ENCODE measurements at regions of chr22 and their contacts with region 1.

Region 1: DNA sequence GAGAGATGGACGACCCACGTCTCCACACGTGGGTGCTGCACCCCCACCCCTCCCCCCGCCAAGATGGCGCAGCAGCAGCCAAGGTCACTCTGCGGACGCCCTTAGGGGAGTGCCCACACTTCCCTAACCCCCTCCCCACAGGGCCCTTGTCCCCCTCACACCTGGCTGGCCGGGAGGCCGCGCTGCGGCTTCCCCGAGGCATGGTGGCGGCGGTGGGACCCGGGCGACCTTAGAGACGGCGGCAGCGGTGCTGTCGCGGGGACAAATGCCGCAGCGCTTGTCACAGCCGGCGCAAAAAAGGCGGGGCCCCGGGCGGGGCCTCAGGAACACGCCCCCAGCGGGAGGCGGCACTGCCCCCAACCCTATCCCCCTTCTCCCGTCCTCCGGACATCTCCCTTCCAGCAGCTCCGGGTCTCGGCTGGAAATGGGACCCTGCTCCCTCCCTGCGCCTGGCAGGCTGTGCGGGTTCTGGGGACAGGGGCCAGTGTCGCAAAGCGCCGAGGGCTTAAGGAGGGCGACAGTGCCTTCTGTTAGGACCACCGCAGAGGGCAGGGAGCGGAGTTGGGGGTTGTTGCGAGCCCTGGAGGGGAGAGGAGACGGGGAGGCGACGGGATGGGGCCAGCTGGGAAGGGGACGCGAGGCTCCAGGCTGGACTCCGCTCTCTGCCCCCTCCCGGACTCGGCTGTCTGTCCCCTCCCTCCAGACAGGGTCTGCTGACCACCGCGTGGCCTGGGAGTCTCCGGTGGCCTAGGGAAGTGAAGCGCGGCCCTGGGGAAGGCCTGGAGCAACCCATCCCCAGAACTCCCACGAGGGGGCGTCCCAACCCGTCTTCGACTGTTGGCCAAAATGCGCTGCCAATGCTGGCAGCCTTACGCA is at the start of gene CHCHD10:
- DNase-seq: no peak
- H3K4me3 ChIP-seq: peak within 1 kb of the TSS; percentile 55 to 84
- H3K27ac ChIP-seq: peak within 1 kb of the TSS; percentile 68
- H3K4me1 ChIP-seq: peaks cover 62% of the 10 kb centered on the region
- H3K27me3 ChIP-seq: no peaks in the 10 kb centered on the region
- CTCF ChIP-seq: peak; percentile 48 to 78 (median 71)
- POLR2A ChIP-seq: peak in 1 of 2 donors; percentile 56
- total RNA-seq, gene CHCHD10: 12.0 TPM

Region 2: GRCh38 chr22:23838681-23839468 is 71.0 kb after region 1 on chr22 and contains the start of gene DERL3:
- intact Hi-C with region 1: loop called (anchors 5 kb)
- DNase-seq: peak in 1 of 2 donors; percentile 95
- H3K4me3 ChIP-seq: peak within 1 kb of the TSS; percentile 40 to 52
- H3K27ac ChIP-seq: no peak within 1 kb of the TSS
- H3K4me1 ChIP-seq: peaks cover 23% of the 10 kb centered on the region
- H3K27me3 ChIP-seq: no peaks in the 10 kb centered on the region
- CTCF ChIP-seq: no peak
- POLR2A ChIP-seq: no peak
- total RNA-seq, gene DERL3: 0.25 TPM

Region 3: DNA sequence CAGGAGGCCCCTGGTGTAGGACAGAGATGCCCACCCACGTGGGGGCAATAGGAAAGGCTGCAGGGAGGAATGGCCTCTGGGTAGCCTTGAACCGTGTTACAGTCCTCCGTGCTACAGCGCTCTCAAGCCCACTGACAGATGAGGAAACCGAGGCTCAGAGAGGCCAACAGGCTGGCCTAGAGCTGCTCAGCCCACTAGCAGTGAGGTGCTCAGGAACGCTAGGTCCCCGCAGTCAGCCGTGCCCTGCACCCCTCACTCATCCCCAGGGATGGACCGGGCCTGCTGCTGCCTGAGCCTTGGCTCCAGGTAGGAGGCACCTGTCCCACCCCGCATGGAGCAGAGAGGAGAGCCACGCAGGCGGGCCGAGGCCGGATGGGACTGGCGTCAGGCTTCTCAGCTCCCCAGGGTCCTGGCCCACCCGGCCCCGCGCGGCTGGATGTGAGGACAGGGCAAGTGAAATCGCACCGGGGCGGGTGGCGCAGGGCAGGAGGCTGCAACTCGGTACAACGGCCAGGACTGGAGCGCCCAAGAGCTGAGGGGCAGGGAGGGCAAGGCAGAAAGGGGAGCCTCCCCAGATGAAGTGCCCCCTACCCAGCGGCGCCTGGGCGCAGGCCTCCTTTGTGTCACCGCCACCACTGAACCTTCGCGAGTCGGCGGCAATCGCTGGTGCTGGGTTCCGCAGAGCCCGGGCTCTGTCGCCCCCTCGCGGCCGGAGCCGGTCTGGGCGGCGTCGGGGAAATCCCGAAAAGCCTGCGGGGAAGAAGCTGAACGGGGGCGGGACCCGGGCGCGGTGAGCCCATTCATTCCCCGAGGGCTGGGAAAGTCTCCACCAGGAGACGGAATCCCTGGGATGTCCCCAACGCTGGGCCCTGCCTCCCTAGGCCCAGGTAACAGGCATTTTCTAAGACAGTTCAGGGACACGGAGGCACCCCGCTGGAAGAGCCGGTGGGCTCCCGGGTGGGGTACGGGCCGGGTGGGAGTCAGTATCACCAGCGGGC is 81.4 kb after region 1 on chr22:
- intact Hi-C with region 1: loop called (anchors 5 kb)
- DNase-seq: no peak
- H3K4me3 ChIP-seq: no peak overlapping the region
- H3K27ac ChIP-seq: no peak overlapping the region
- H3K4me1 ChIP-seq: peaks cover 44% of the 10 kb centered on the region
- H3K27me3 ChIP-seq: no peaks in the 10 kb centered on the region
- CTCF ChIP-seq: peak; percentile 92 to 94 (median 93)
- POLR2A ChIP-seq: no peak